ENCODE measurements at regions of chr5 and their contacts with region 1.

Region 1: DNA sequence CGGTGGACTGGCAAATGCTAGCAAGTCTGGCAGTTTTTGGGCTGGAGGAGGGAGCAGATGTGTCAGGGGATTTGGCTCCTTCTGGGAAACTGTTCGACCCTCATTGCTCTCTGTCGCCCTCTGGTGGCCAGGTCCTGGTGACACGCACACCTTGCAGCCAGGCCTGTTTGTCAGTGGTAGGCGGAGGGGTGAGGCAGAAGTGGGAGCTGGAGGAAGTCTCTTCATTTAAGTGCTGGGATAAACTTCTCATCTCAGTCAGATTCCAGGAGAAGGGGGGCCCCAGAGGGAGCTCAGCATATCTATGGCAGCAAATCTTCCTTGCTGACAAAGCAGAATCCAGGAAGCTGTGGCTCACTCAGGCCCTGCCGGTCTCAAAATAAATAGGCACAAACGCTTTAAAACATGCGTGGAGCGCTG is 326.5 kb downstream of the ZSWIM6 start:
- DNase-seq: peak; percentile 67 to 89 (median 81)
- ATAC-seq: peak; percentile 74
- H3K4me3 ChIP-seq: no peak overlapping the region
- H3K4me3 Mint-ChIP-seq: no peak overlapping the region
- H3K27ac ChIP-seq: no peak overlapping the region
- H3K27ac Mint-ChIP-seq: no peak overlapping the region
- H3K4me1 ChIP-seq: no peaks in the 10 kb centered on the region
- H3K4me1 Mint-ChIP-seq: no peaks in the 10 kb centered on the region
- H3K27me3 ChIP-seq: no peaks in the 10 kb centered on the region
- H3K27me3 Mint-ChIP-seq: peaks cover 14% of the 10 kb centered on the region
- CTCF ChIP-seq: peak; percentile 98

Region 2: DNA sequence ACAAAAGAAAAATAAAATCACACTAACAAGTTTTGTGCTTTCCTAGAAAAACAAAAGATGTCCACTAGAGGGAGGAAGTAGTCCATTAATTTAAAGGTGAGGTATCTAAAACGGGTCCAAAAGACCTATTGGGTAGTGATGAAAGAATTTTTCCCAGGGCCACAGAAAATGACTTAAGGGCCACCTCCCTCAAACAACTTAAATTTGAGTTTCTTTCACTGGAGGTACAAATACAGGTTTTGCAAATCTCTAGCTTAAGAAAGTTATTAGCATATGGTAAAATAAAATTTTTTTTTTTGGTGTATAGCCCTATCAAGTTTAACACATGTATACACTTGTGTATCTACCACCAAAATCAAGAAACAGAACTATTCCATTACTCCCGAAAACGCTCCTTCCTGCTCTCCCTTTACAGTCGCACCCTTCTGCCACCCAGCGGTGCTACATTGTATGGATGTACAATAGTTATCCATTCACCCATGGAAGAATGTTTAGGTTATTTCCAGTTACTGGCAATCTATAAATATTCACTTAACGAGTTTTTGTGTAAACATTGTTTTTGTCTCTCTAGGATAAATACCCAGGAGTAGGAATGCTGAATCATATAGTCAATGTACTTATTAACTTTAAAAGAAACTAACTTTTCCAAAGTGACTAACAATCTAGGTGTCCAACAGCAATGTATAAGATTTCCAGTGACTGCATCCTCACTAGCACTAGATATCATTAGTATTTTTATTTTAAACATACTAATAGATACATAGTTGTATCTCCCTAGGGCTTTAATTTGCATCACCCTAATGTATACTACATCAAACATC is 980.5 kb before region 1 on chr5:
- CTCF ChIA-PET with region 1: no interaction called
- POLR2A ChIA-PET with region 1: no interaction called
- intact Hi-C with region 1: loop called (anchors 5 kb)
- DNase-seq: peak in 3 of 14 experiments; percentile 47 to 52 (median 48)
- ATAC-seq: no peak
- H3K4me3 ChIP-seq: no peak overlapping the region
- H3K4me3 Mint-ChIP-seq: no peak overlapping the region
- H3K27ac ChIP-seq: no peak overlapping the region
- H3K27ac Mint-ChIP-seq: no peak overlapping the region
- H3K4me1 ChIP-seq: no peaks in the 10 kb centered on the region
- H3K4me1 Mint-ChIP-seq: peaks cover 4% of the 10 kb centered on the region
- H3K27me3 ChIP-seq: no peaks in the 10 kb centered on the region
- H3K27me3 Mint-ChIP-seq: no peaks in the 10 kb centered on the region
- CTCF ChIP-seq: peak; percentile 72

Region 3: DNA sequence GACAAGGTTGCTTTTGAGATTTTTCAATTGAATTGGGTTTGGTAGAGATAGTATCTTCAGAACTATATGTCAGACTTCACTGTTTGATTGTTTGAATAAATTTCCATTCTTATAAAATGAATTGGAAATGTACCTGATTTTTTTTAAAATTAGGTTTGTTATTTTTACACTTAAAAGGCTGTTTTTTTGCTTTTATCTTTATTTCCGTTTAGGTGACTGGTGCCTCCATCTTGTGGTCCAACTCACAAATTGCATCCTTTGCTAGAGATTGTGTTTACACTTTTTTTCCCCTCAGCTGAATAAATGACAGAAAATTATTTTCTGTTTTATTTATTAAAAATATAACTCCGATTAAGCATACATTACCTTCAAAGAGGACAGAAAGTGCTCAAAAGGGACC is 698.0 kb before region 1 on chr5:
- CTCF ChIA-PET with region 1: no interaction called
- POLR2A ChIA-PET with region 1: no interaction called
- intact Hi-C with region 1: loop called (anchors 1 to 2 kb)
- DNase-seq: peak in 3 of 14 experiments; percentile 39 to 53 (median 47)
- ATAC-seq: peak; percentile 52
- H3K4me3 ChIP-seq: no peak overlapping the region
- H3K4me3 Mint-ChIP-seq: no peak overlapping the region
- H3K27ac ChIP-seq: no peak overlapping the region
- H3K27ac Mint-ChIP-seq: no peak overlapping the region
- H3K4me1 ChIP-seq: no peaks in the 10 kb centered on the region
- H3K4me1 Mint-ChIP-seq: peaks cover 20% of the 10 kb centered on the region
- H3K27me3 ChIP-seq: no peaks in the 10 kb centered on the region
- H3K27me3 Mint-ChIP-seq: no peaks in the 10 kb centered on the region
- CTCF ChIP-seq: peak; percentile 77

Region 4: GRCh38 chr5:61055434-61056006 is 603.1 kb before region 1 on chr5:
- CTCF ChIA-PET with region 1: interaction called, 7 read pairs
- POLR2A ChIA-PET with region 1: no interaction called
- intact Hi-C with region 1: loop called (anchors 1 to 2 kb)
- DNase-seq: peak in 3 of 14 experiments; percentile 31 to 52 (median 50)
- ATAC-seq: peak; percentile 55
- H3K4me3 ChIP-seq: no peak overlapping the region
- H3K4me3 Mint-ChIP-seq: no peak overlapping the region
- H3K27ac ChIP-seq: no peak overlapping the region
- H3K27ac Mint-ChIP-seq: no peak overlapping the region
- H3K4me1 ChIP-seq: no peaks in the 10 kb centered on the region
- H3K4me1 Mint-ChIP-seq: no peaks in the 10 kb centered on the region
- H3K27me3 ChIP-seq: no peaks in the 10 kb centered on the region
- H3K27me3 Mint-ChIP-seq: no peaks in the 10 kb centered on the region
- CTCF ChIP-seq: peak; percentile 55

Region 5: DNA sequence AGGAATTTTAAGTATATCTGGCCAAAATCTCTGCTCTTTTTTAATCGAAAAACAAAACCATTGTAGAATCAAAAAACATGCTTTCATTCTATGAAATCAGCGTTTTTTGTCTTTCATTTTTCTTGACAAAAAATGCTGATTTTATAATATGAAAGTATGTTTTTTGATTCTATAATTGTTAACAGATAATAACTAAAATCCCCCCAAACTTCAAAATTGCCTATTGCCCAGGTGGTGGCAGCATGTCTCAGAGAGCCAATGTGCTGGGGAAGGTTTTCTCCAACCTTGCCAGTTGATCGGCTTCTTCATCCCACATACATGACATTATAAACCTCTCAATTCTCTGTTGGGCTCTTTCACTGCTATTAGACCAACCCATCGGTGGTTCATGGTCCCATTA is 491.2 kb before region 1 on chr5:
- CTCF ChIA-PET with region 1: no interaction called
- POLR2A ChIA-PET with region 1: no interaction called
- intact Hi-C with region 1: loop called in 1 of 2 experiments (anchors 5 kb)
- DNase-seq: no peak
- ATAC-seq: no peak
- H3K4me3 ChIP-seq: no peak overlapping the region
- H3K4me3 Mint-ChIP-seq: no peak overlapping the region
- H3K27ac ChIP-seq: no peak overlapping the region
- H3K27ac Mint-ChIP-seq: no peak overlapping the region
- H3K4me1 ChIP-seq: peaks cover 6% of the 10 kb centered on the region
- H3K4me1 Mint-ChIP-seq: peaks cover 13% of the 10 kb centered on the region
- H3K27me3 ChIP-seq: no peaks in the 10 kb centered on the region
- H3K27me3 Mint-ChIP-seq: no peaks in the 10 kb centered on the region
- CTCF ChIP-seq: no peak

Region 6: DNA sequence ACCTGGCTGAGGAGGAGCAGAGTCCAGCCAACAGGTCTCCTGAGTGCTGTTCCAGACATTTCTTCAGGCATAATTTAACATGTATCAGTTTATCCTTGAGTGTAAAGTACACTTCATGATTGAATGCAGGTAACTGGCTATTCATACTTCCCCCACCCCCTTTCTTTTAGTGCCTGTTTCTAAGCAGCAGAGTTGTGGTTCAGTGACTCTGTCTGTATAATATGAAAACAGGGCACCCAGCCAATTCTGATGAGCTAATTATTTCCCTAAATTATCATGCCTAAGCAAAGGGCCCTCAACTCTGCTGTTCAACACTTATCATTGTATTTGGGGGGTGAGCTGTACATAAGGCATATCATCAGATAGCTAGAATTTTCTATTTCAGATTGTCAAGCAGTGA is 378.4 kb before region 1 on chr5:
- CTCF ChIA-PET with region 1: no interaction called
- POLR2A ChIA-PET with region 1: no interaction called
- intact Hi-C with region 1: loop called in 1 of 2 experiments (anchors 5 kb)
- DNase-seq: peak in 3 of 14 experiments; percentile 11 to 37 (median 24)
- ATAC-seq: peak; percentile 47
- H3K4me3 ChIP-seq: no peak overlapping the region
- H3K4me3 Mint-ChIP-seq: no peak overlapping the region
- H3K27ac ChIP-seq: no peak overlapping the region
- H3K27ac Mint-ChIP-seq: no peak overlapping the region
- H3K4me1 ChIP-seq: peaks cover 30% of the 10 kb centered on the region
- H3K4me1 Mint-ChIP-seq: peaks cover 18% of the 10 kb centered on the region
- H3K27me3 ChIP-seq: no peaks in the 10 kb centered on the region
- H3K27me3 Mint-ChIP-seq: no peaks in the 10 kb centered on the region
- CTCF ChIP-seq: no peak

Measured in CD4-positive, alpha-beta T cell (primary cell).